ENCODE measurements at regions of chr6 and their contacts with region 1.

Region 1: GRCh38 chr6:52063584-52064344 is 23.6 kb downstream of the PKHD1 start:
- DNase-seq: peak; percentile 25 to 75 (median 41)
- ATAC-seq: peak; percentile 88 to 95 (median 93)
- H3K4me3 ChIP-seq: peak overlapping the region; percentile 10 to 14
- H3K4me3 Mint-ChIP-seq: peak overlapping the region; percentile 36 to 74 (median 59)
- H3K27ac ChIP-seq: peak overlapping the region; percentile 40
- H3K27ac Mint-ChIP-seq: peak overlapping the region; percentile 90 to 91
- H3K4me1 ChIP-seq: peaks cover 5 to 10% of the 10 kb centered on the region in 2 experiments
- H3K4me1 Mint-ChIP-seq: peaks cover 12 to 14% (median 13%) of the 10 kb centered on the region in 3 donors
- H3K27me3 ChIP-seq: peaks cover 0 to 3% of the 10 kb centered on the region in 2 experiments
- H3K27me3 Mint-ChIP-seq: peaks cover under 1 to 2% of the 10 kb centered on the region in 2 donors

Region 2: GRCh38 chr6:51972659-51973058 is 91.1 kb before region 1 on chr6:
- CTCF ChIA-PET with region 1: interaction called in 1 of 2 experiments, 13 read pairs
- POLR2A ChIA-PET with region 1: no interaction called
- DNase-seq: no peak
- ATAC-seq: no peak
- H3K4me3 ChIP-seq: no peak overlapping the region
- H3K4me3 Mint-ChIP-seq: no peak overlapping the region
- H3K27ac ChIP-seq: no peak overlapping the region
- H3K27ac Mint-ChIP-seq: no peak overlapping the region
- H3K4me1 ChIP-seq: no peaks in the 10 kb centered on the region
- H3K4me1 Mint-ChIP-seq: no peaks in the 10 kb centered on the region
- H3K27me3 ChIP-seq: no peaks in the 10 kb centered on the region
- H3K27me3 Mint-ChIP-seq: peaks cover 2 to 18% of the 10 kb centered on the region in 2 donors